OCI-LY7 (cell line): ENCODE measurements at regions of chr16 and their contacts with region 1.

Region 1: GRCh38 chr16:71255721-71256120 is 25.2 kb upstream of the HYDIN start:
- DNase-seq: no peak
- H3K4me3 ChIP-seq: no peak overlapping the region
- H3K27ac ChIP-seq: no peak overlapping the region
- H3K4me1 ChIP-seq: no peaks in the 10 kb centered on the region
- CTCF ChIP-seq: no peak

Region 2: GRCh38 chr16:71288890-71289733 is 33.4 kb after region 1 on chr16 and contains the start of gene CMTR2:
- CTCF ChIA-PET with region 1: no interaction called
- POLR2A ChIA-PET with region 1: no interaction called
- intact Hi-C with region 1: no loop called
- DNase-seq: peak; percentile 90
- H3K4me3 ChIP-seq: peak within 1 kb of the TSS; percentile 78
- H3K27ac ChIP-seq: peak within 1 kb of the TSS; percentile 36
- H3K4me1 ChIP-seq: peaks cover 3% of the 10 kb centered on the region
- CTCF ChIP-seq: no peak
- total RNA-seq, gene CMTR2: 10.6 and 10.9 TPM in 2 replicates

Region 3: DNA sequence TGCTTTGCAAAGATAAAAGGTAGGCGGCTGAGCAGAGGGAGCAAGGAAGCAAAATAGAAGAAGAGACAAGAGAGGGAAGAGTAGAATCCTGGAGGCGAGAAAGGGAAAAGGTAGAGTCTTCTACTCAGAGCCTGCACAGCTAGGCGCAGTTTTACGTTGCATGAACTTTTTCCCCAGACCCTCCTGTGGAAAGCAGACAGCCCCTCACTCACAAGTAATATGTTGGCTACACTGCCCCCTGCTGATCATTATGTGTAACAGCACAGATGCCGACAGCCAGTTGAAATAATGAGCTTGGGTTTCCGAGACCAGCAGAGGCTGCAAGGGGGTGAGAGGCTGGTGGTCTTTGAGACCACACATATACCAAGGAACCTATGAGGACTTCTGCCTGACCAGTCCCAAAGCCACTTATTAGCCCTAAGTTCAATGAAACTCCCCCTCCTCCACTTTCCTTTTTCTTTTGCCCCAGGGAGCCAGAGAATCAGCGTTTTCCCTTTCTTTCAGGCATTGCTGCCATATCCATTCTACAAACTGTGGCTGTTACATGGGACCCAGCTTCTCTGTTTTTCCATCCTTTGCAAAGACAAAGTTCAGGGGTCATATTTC is 55.9 kb after region 1 on chr16:
- CTCF ChIA-PET with region 1: no interaction called
- POLR2A ChIA-PET with region 1: no interaction called
- intact Hi-C with region 1: loop called (anchors 10 kb)
- DNase-seq: peak; percentile 52
- H3K4me3 ChIP-seq: no peak overlapping the region
- H3K27ac ChIP-seq: no peak overlapping the region
- H3K4me1 ChIP-seq: no peaks in the 10 kb centered on the region
- CTCF ChIP-seq: peak; percentile 90

Region 4: GRCh38 chr16:71402007-71402406 is 146.3 kb after region 1 on chr16:
- CTCF ChIA-PET with region 1: no interaction called
- POLR2A ChIA-PET with region 1: no interaction called
- intact Hi-C with region 1: no loop called
- DNase-seq: no peak
- H3K4me3 ChIP-seq: no peak overlapping the region
- H3K27ac ChIP-seq: no peak overlapping the region
- H3K4me1 ChIP-seq: no peaks in the 10 kb centered on the region
- CTCF ChIP-seq: no peak